ENCODE measurements at regions of chr2 and their contacts with region 1.

Region 1: DNA sequence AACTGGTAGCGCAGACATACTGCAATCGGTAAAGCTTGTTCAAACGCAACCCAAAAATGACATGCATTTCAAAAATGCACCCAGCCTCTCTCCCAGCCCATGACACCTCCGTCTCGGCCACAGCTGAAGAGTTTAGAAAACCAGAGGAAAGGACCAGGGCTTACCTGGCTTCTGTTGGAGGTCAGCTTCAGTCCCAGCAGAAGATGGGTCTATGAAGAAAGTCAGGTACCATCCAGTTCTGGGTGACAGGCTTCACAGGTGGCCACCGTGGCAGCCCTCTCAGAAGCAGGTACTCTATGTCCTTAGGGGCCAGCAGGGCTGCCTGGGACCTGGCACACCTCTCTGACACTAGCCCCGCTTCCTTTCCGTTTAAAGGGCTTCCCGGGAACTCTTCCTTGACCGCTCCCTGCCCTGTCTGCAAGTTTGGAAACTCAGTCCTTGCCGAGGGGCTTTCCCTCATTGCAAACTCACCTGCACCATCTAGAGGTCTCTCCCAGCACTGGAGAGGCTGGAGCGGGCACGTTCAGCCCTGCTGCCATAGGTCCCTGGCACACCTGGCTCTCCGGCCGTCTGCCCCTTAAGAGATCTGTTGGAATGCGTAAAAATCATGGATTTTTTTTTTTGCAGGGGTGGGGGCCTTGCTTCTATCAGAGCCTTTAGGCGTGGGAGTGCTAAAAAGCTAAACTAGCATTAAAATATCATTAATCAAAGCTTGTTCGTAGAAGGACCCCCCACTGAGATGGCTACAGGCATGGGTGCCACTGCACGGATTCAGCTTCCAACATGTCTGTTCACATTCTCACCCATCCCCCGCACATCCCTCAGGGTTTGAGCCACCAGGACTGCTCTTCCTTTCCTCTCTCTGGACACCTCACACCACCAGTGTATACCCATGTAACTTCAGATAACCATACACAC is at the start of gene EDAR:
- DNase-seq: peak in 8 of 9 experiments; percentile 11 to 75 (median 54)
- ATAC-seq: peak; percentile 64
- H3K4me3 ChIP-seq: peak within 1 kb of the TSS; percentile 30 to 35
- H3K4me3 Mint-ChIP-seq: peak within 1 kb of the TSS; percentile 85
- H3K27ac ChIP-seq: no peak within 1 kb of the TSS
- H3K27ac Mint-ChIP-seq: peak within 1 kb of the TSS; percentile 88
- H3K4me1 ChIP-seq: peaks cover 32% of the 10 kb centered on the region
- H3K4me1 Mint-ChIP-seq: peaks cover 70% of the 10 kb centered on the region
- H3K27me3 ChIP-seq: no peaks in the 10 kb centered on the region
- H3K27me3 Mint-ChIP-seq: no peaks in the 10 kb centered on the region
- CTCF ChIP-seq: peak; percentile 51
- total RNA-seq, gene EDAR: 1.6 to 2.0 TPM

Region 2: DNA sequence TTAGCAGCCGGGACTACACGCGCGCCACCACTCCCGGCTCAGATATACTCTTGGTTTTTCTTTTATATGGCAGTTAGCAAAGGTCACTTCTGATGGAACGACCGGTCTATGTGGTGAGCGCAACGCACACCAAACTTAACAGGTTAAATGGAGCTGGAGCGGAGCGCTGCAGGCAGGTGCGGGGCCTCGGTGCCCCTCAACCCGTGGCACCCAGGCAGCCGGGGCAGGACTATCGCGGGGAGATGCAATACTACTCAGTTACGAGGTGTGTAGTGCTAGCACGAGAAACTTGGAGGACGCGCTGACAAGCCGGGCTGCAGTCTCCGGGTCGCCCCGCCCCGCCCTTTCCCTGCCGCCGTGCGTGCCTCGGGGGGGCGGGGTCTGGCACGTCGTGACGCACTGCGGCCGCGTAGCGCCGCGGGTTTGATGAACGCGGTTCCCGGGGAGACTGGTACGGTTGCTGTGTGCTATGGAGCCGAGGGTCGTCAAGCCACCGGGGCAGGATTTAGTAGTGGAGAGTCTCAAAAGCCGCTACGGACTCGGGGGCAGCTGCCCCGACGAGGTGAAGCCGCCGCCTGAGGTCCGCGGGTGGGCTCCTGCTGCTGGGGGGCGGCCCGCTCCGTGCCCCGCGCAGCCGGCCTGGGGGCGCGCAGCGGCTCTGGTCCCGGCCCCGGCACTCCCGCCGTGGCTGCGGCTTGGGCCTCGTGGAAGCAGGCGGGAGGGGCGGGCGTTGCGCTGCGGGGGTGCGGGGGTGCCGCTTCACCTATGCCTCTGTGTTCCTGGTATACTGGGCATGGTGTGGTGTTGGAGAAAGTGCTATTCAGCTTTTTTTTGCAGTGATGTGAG is 202.5 kb before region 1 on chr2 and contains the start of gene CCDC138:
- CTCF ChIA-PET with region 1: no interaction called
- POLR2A ChIA-PET with region 1: no interaction called
- intact Hi-C with region 1: loop called in 1 of 2 experiments (anchors 10 kb)
- DNase-seq: peak; percentile 85 to 95 (median 93)
- ATAC-seq: peak; percentile 97
- H3K4me3 ChIP-seq: peak within 1 kb of the TSS; percentile 76 to 90
- H3K4me3 Mint-ChIP-seq: peak within 1 kb of the TSS; percentile 99
- H3K27ac ChIP-seq: peak within 1 kb of the TSS; percentile 77 to 83
- H3K27ac Mint-ChIP-seq: peak within 1 kb of the TSS; percentile 97
- H3K4me1 ChIP-seq: peaks cover 10% of the 10 kb centered on the region
- H3K4me1 Mint-ChIP-seq: peaks cover 22% of the 10 kb centered on the region
- H3K27me3 ChIP-seq: no peaks in the 10 kb centered on the region
- H3K27me3 Mint-ChIP-seq: no peaks in the 10 kb centered on the region
- CTCF ChIP-seq: no peak
- total RNA-seq, gene CCDC138: 4.6 to 5.9 TPM

Region 3: GRCh38 chr2:108960006-108960405 is 29.0 kb before region 1 on chr2:
- CTCF ChIA-PET with region 1: interaction called, 11 read pairs
- POLR2A ChIA-PET with region 1: no interaction called
- intact Hi-C with region 1: no loop called
- DNase-seq: peak in 1 of 9 experiments; percentile 15
- ATAC-seq: no peak
- H3K4me3 ChIP-seq: no peak overlapping the region
- H3K4me3 Mint-ChIP-seq: no peak overlapping the region
- H3K27ac ChIP-seq: no peak overlapping the region
- H3K27ac Mint-ChIP-seq: peak overlapping the region; percentile 92
- H3K4me1 ChIP-seq: peaks cover 73% of the 10 kb centered on the region
- H3K4me1 Mint-ChIP-seq: peaks cover 77% of the 10 kb centered on the region
- H3K27me3 ChIP-seq: no peaks in the 10 kb centered on the region
- H3K27me3 Mint-ChIP-seq: no peaks in the 10 kb centered on the region
- CTCF ChIP-seq: no peak

Region 4: GRCh38 chr2:108978709-108979111 is 10.3 kb before region 1 on chr2:
- CTCF ChIA-PET with region 1: interaction called, 28 read pairs
- POLR2A ChIA-PET with region 1: interaction called, 5 read pairs
- intact Hi-C with region 1: no loop called
- DNase-seq: no peak
- ATAC-seq: no peak
- H3K4me3 ChIP-seq: no peak overlapping the region
- H3K4me3 Mint-ChIP-seq: no peak overlapping the region
- H3K27ac ChIP-seq: no peak overlapping the region
- H3K27ac Mint-ChIP-seq: no peak overlapping the region
- H3K4me1 ChIP-seq: peaks cover 30% of the 10 kb centered on the region
- H3K4me1 Mint-ChIP-seq: peaks cover 62% of the 10 kb centered on the region
- H3K27me3 ChIP-seq: no peaks in the 10 kb centered on the region
- H3K27me3 Mint-ChIP-seq: no peaks in the 10 kb centered on the region
- CTCF ChIP-seq: no peak

Region 5: DNA sequence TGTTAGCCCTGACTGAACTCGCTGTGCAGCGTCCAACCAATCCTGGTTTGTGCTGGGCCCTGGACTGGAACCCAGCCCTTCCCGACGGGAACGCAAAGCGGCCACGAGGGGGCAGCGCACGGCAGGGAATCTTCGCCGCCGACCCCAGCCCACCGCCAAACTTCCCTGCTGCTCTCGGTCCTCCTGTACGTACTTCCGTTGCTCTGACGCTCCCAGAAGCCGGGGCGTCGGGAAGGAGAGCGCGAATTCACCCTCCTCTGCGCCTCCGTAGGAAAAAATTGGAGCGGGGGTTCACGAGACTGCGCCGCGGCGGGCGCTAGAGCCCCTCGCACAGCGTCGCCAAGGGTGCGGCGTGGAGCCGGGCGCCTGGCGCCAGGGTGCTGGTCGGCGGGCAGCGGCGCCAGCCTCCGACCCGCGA is 139.0 kb after region 1 on chr2:
- CTCF ChIA-PET with region 1: interaction called, 6 read pairs
- POLR2A ChIA-PET with region 1: no interaction called
- intact Hi-C with region 1: loop called in 1 of 2 experiments (anchors 2 kb)
- DNase-seq: peak; percentile 38 to 83 (median 63)
- ATAC-seq: peak; percentile 54
- H3K4me3 ChIP-seq: peak overlapping the region; percentile 57 to 89
- H3K4me3 Mint-ChIP-seq: peak overlapping the region; percentile 84
- H3K27ac ChIP-seq: peak overlapping the region in 1 of 2 experiments; percentile 47
- H3K27ac Mint-ChIP-seq: peak overlapping the region; percentile 66
- H3K4me1 ChIP-seq: peaks cover 19% of the 10 kb centered on the region
- H3K4me1 Mint-ChIP-seq: peaks cover 48% of the 10 kb centered on the region
- H3K27me3 ChIP-seq: peaks cover 0 to 16% of the 10 kb centered on the region in 2 experiments
- H3K27me3 Mint-ChIP-seq: peaks cover 9% of the 10 kb centered on the region
- CTCF ChIP-seq: peak; percentile 86

Measured in CD8-positive, alpha-beta T cell (primary cell).